Naive thymus-derived CD4-positive, alpha-beta T cell (primary cell): ENCODE measurements at regions of chr17 and their contacts with region 1.

Region 1: GRCh38 chr17:36601303-36602029 is at the start of gene MRM1:
- DNase-seq: peak; percentile 72 to 89 (median 80)
- ATAC-seq: peak; percentile 90
- H3K4me3 ChIP-seq: peak within 1 kb of the TSS; percentile 95
- H3K4me3 Mint-ChIP-seq: peak within 1 kb of the TSS; percentile 92 to 97 (median 94)
- H3K27ac ChIP-seq: peak within 1 kb of the TSS; percentile 79
- H3K27ac Mint-ChIP-seq: peak within 1 kb of the TSS; percentile 91 to 96 (median 94)
- H3K4me1 ChIP-seq: peaks cover 11 to 19% of the 10 kb centered on the region in 2 donors
- H3K4me1 Mint-ChIP-seq: peaks cover 23 to 49% (median 41%) of the 10 kb centered on the region in 7 donors
- H3K27me3 ChIP-seq: no peaks in the 10 kb centered on the region
- H3K27me3 Mint-ChIP-seq: no peaks in the 10 kb centered on the region
- total RNA-seq, gene MRM1: 3.8 to 15.6 (median 13.3) TPM

Region 2: GRCh38 chr17:36072431-36073121 is 528.9 kb before region 1 on chr17:
- CTCF ChIA-PET with region 1: no interaction called
- POLR2A ChIA-PET with region 1: no interaction called
- intact Hi-C with region 1: no loop called
- DNase-seq: peak in 5 of 9 donors; percentile 12 to 76 (median 21)
- ATAC-seq: peak; percentile 84
- H3K4me3 ChIP-seq: no peak overlapping the region
- H3K4me3 Mint-ChIP-seq: peak overlapping the region in 1 of 10 donors; percentile 9
- H3K27ac ChIP-seq: no peak overlapping the region
- H3K27ac Mint-ChIP-seq: no peak overlapping the region
- H3K4me1 ChIP-seq: peaks cover 0 to 9% of the 10 kb centered on the region in 2 donors
- H3K4me1 Mint-ChIP-seq: peaks cover 0 to 9% (median 3%) of the 10 kb centered on the region in 7 donors
- H3K27me3 ChIP-seq: no peaks in the 10 kb centered on the region
- H3K27me3 Mint-ChIP-seq: peaks cover 0 to 22% (median 4%) of the 10 kb centered on the region in 5 donors

Region 3: GRCh38 chr17:36486204-36487194 is 115.0 kb before region 1 on chr17 and contains the start of gene ZNHIT3:
- CTCF ChIA-PET with region 1: interaction called, 3 read pairs
- POLR2A ChIA-PET with region 1: interaction called, 5 read pairs
- intact Hi-C with region 1: loop called in 1 of 2 experiments (anchors 1 kb)
- DNase-seq: peak; percentile 74 to 94 (median 91)
- ATAC-seq: peak; percentile 98
- H3K4me3 ChIP-seq: peak within 1 kb of the TSS; percentile 82
- H3K4me3 Mint-ChIP-seq: peak within 1 kb of the TSS; percentile 87 to 100 (median 100)
- H3K27ac ChIP-seq: peak within 1 kb of the TSS; percentile 86
- H3K27ac Mint-ChIP-seq: peak within 1 kb of the TSS; percentile 94 to 100 (median 99)
- H3K4me1 ChIP-seq: peaks cover 29 to 41% of the 10 kb centered on the region in 2 donors
- H3K4me1 Mint-ChIP-seq: peaks cover 39 to 70% (median 49%) of the 10 kb centered on the region in 7 donors
- H3K27me3 ChIP-seq: no peaks in the 10 kb centered on the region
- H3K27me3 Mint-ChIP-seq: peaks cover 8 to 11% (median 10%) of the 10 kb centered on the region in 5 donors
- total RNA-seq, gene ZNHIT3: 38.4 to 59.9 (median 57.4) TPM

Region 4: GRCh38 chr17:36629252-36629847 is 27.9 kb after region 1 on chr17:
- CTCF ChIA-PET with region 1: interaction called, 8 read pairs
- POLR2A ChIA-PET with region 1: no interaction called
- intact Hi-C with region 1: loop called in 1 of 2 experiments (anchors 1 kb)
- DNase-seq: peak; percentile 48 to 84 (median 68)
- ATAC-seq: peak; percentile 93
- H3K4me3 ChIP-seq: no peak overlapping the region
- H3K4me3 Mint-ChIP-seq: no peak overlapping the region
- H3K27ac ChIP-seq: no peak overlapping the region
- H3K27ac Mint-ChIP-seq: peak overlapping the region in 1 of 9 donors; percentile 4
- H3K4me1 ChIP-seq: no peaks in the 10 kb centered on the region
- H3K4me1 Mint-ChIP-seq: peaks cover 0 to 3% (median 0%) of the 10 kb centered on the region in 7 donors
- H3K27me3 ChIP-seq: no peaks in the 10 kb centered on the region
- H3K27me3 Mint-ChIP-seq: peaks cover 0 to 16% (median 0%) of the 10 kb centered on the region in 5 donors

Region 5: GRCh38 chr17:37047631-37048104 is 446.2 kb after region 1 on chr17:
- CTCF ChIA-PET with region 1: interaction called, 17 read pairs
- POLR2A ChIA-PET with region 1: interaction called, 3 read pairs
- intact Hi-C with region 1: loop called (anchors 1 kb)
- DNase-seq: peak; percentile 42 to 74 (median 69)
- ATAC-seq: peak; percentile 91
- H3K4me3 ChIP-seq: no peak overlapping the region
- H3K4me3 Mint-ChIP-seq: no peak overlapping the region
- H3K27ac ChIP-seq: no peak overlapping the region
- H3K27ac Mint-ChIP-seq: peak overlapping the region in 3 of 9 donors; percentile 28 to 75 (median 32)
- H3K4me1 ChIP-seq: no peaks in the 10 kb centered on the region
- H3K4me1 Mint-ChIP-seq: peaks cover 11 to 15% (median 12%) of the 10 kb centered on the region in 7 donors
- H3K27me3 ChIP-seq: no peaks in the 10 kb centered on the region
- H3K27me3 Mint-ChIP-seq: no peaks in the 10 kb centered on the region

Region 6: GRCh38 chr17:37117373-37118142 is 516.1 kb after region 1 on chr17:
- CTCF ChIA-PET with region 1: no interaction called
- POLR2A ChIA-PET with region 1: no interaction called
- intact Hi-C with region 1: no loop called
- DNase-seq: no peak
- ATAC-seq: no peak
- H3K4me3 ChIP-seq: no peak overlapping the region
- H3K4me3 Mint-ChIP-seq: no peak overlapping the region
- H3K27ac ChIP-seq: no peak overlapping the region
- H3K27ac Mint-ChIP-seq: no peak overlapping the region
- H3K4me1 ChIP-seq: no peaks in the 10 kb centered on the region
- H3K4me1 Mint-ChIP-seq: peaks cover 0 to 5% (median 0%) of the 10 kb centered on the region in 7 donors
- H3K27me3 ChIP-seq: no peaks in the 10 kb centered on the region
- H3K27me3 Mint-ChIP-seq: no peaks in the 10 kb centered on the region

Region 7: DNA sequence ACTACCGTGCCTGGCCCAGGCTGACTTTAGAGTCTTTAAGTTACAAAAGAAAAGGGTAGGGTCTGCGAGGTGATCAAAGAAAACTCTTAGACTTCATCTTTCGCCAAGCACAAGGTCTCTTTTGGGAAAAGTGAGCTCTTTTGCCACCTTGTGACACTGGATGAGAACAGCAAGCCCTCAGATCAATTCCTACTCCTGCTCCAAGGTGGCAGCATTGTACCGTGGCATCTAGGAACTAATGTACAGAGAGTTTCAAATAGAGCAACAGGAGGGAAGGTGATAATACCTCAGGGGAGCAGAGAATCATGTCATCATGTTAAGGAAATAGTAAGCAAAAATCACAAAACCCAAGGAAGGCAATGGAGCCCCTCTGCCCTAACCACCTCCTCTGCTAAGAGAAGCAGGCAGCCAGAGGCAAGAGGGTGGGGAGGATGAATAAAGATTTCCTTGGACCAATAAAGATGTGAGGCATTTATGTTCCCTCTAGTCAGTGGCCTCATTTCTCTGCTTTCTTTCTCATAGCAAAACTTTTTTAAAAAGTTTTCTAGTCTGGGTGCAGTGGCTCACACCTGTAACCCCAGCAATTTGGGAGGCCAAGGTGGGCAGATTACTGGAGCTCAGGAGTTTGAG is 772.2 kb after region 1 on chr17:
- CTCF ChIA-PET with region 1: interaction called, 5 read pairs
- POLR2A ChIA-PET with region 1: no interaction called
- intact Hi-C with region 1: loop called in 1 of 2 experiments (anchors 1 kb)
- DNase-seq: peak in 8 of 9 donors; percentile 41 to 71 (median 63)
- ATAC-seq: peak; percentile 99
- H3K4me3 ChIP-seq: no peak overlapping the region
- H3K4me3 Mint-ChIP-seq: no peak overlapping the region
- H3K27ac ChIP-seq: no peak overlapping the region
- H3K27ac Mint-ChIP-seq: peak overlapping the region in 2 of 9 donors; percentile 2 to 69
- H3K4me1 ChIP-seq: no peaks in the 10 kb centered on the region
- H3K4me1 Mint-ChIP-seq: peaks cover 0 to 8% (median 5%) of the 10 kb centered on the region in 7 donors
- H3K27me3 ChIP-seq: no peaks in the 10 kb centered on the region
- H3K27me3 Mint-ChIP-seq: no peaks in the 10 kb centered on the region

Region 8: GRCh38 chr17:37609170-37610040 is 1007.9 kb after region 1 on chr17 and contains the start of gene SYNRG:
- CTCF ChIA-PET with region 1: no interaction called
- POLR2A ChIA-PET with region 1: interaction called, 3 read pairs
- intact Hi-C with region 1: loop called in 1 of 2 experiments (anchors 2 kb)
- DNase-seq: peak; percentile 92 to 96 (median 93)
- ATAC-seq: peak; percentile 93
- H3K4me3 ChIP-seq: peak within 1 kb of the TSS; percentile 58
- H3K4me3 Mint-ChIP-seq: peak within 1 kb of the TSS; percentile 74 to 97 (median 88)
- H3K27ac ChIP-seq: peak within 1 kb of the TSS; percentile 91
- H3K27ac Mint-ChIP-seq: peak within 1 kb of the TSS; percentile 82 to 95 (median 92)
- H3K4me1 ChIP-seq: peaks cover 31 to 32% of the 10 kb centered on the region in 2 donors
- H3K4me1 Mint-ChIP-seq: peaks cover 26 to 44% (median 38%) of the 10 kb centered on the region in 7 donors
- H3K27me3 ChIP-seq: no peaks in the 10 kb centered on the region
- H3K27me3 Mint-ChIP-seq: no peaks in the 10 kb centered on the region
- total RNA-seq, gene SYNRG: 85.0 to 146 (median 128) TPM